ENCODE measurements at regions of chr21 and their contacts with region 1.

Region 1: GRCh38 chr21:14737922-14738321 is 191.8 kb upstream of the SAMSN1 start:
- DNase-seq: no peak
- ATAC-seq: peak; percentile 82
- H3K4me3 Mint-ChIP-seq: no peak overlapping the region
- H3K27ac Mint-ChIP-seq: no peak overlapping the region
- H3K4me1 Mint-ChIP-seq: peaks cover 35% of the 10 kb centered on the region
- H3K27me3 Mint-ChIP-seq: no peaks in the 10 kb centered on the region
- CTCF ChIP-seq: no peak

Region 2: GRCh38 chr21:14403681-14404318 is 334.1 kb before region 1 on chr21:
- CTCF ChIA-PET with region 1: interaction called, 15 read pairs
- POLR2A ChIA-PET with region 1: no interaction called
- intact Hi-C with region 1: loop called (anchors 1 kb)
- DNase-seq: no peak
- ATAC-seq: peak; percentile 57
- H3K4me3 Mint-ChIP-seq: no peak overlapping the region
- H3K27ac Mint-ChIP-seq: no peak overlapping the region
- H3K4me1 Mint-ChIP-seq: no peaks in the 10 kb centered on the region
- H3K27me3 Mint-ChIP-seq: no peaks in the 10 kb centered on the region
- CTCF ChIP-seq: peak; percentile 77

Region 3: GRCh38 chr21:14533504-14534428 is 204.2 kb before region 1 on chr21:
- CTCF ChIA-PET with region 1: interaction called, 16 read pairs
- POLR2A ChIA-PET with region 1: no interaction called
- intact Hi-C with region 1: no loop called
- DNase-seq: no peak
- ATAC-seq: peak; percentile 85
- H3K4me3 Mint-ChIP-seq: peak overlapping the region; percentile 71
- H3K27ac Mint-ChIP-seq: peak overlapping the region; percentile 98
- H3K4me1 Mint-ChIP-seq: peaks cover 79% of the 10 kb centered on the region
- H3K27me3 Mint-ChIP-seq: no peaks in the 10 kb centered on the region
- CTCF ChIP-seq: no peak

Region 4: GRCh38 chr21:14686466-14687267 is 51.3 kb before region 1 on chr21:
- CTCF ChIA-PET with region 1: interaction called, 12 read pairs
- POLR2A ChIA-PET with region 1: no interaction called
- intact Hi-C with region 1: loop called (anchors 2 kb)
- DNase-seq: no peak
- ATAC-seq: peak; percentile 35
- H3K4me3 Mint-ChIP-seq: peak overlapping the region; percentile 30
- H3K27ac Mint-ChIP-seq: peak overlapping the region; percentile 82
- H3K4me1 Mint-ChIP-seq: peaks cover 73% of the 10 kb centered on the region
- H3K27me3 Mint-ChIP-seq: no peaks in the 10 kb centered on the region
- CTCF ChIP-seq: no peak

Region 5: DNA sequence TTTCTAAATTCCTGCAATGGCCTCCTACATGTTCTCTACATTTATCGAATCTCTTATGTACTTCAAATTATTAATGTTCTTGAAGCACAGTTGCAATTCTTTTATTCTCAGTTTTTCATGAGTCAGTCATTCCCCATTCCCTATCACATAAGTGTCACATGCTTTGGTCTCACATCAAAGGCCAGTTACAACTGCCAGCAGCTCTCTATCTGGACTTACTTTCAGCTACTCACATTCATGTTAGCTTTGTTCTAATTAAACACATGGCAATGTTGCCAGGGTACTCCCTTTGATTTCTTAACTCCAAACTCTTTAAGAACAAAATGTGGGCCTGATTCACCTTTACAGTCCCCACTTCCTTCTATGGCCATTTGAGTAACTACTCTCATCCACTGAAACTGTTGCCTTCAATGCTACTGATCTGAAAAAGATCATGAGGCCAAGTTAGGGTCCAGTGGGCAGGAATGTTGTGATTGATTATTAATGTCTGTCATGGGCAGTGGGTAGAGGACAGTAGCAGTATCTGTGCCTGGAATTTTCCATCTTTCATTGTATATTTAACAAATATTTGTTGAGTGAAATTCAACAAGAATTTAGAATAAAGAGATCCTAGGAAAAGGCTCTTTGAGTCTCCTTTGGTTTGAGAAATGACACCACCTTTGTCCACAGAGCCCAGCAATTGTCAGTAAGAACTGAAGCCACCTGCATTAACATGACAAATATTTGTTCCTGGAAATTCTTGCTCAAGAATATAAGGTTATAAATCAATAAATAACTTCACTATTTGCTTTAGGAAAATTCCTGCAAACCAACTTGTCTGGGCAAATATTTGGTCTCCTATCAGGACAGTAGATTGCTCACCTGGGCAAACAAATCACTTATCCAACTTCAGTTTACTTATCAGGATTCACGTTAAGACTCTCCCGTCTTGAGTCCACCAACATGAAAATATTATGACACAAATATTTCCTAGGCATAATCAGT is 38.2 kb before region 1 on chr21:
- CTCF ChIA-PET with region 1: no interaction called
- POLR2A ChIA-PET with region 1: no interaction called
- intact Hi-C with region 1: no loop called
- DNase-seq: no peak
- ATAC-seq: no peak
- H3K4me3 Mint-ChIP-seq: no peak overlapping the region
- H3K27ac Mint-ChIP-seq: no peak overlapping the region
- H3K4me1 Mint-ChIP-seq: no peaks in the 10 kb centered on the region
- H3K27me3 Mint-ChIP-seq: no peaks in the 10 kb centered on the region
- CTCF ChIP-seq: no peak

Region 6: GRCh38 chr21:15483138-15483780 is 745.3 kb after region 1 on chr21:
- CTCF ChIA-PET with region 1: interaction called, 7 read pairs
- POLR2A ChIA-PET with region 1: no interaction called
- intact Hi-C with region 1: loop called (anchors 1 kb)
- DNase-seq: peak; percentile 54
- ATAC-seq: peak; percentile 99
- H3K4me3 Mint-ChIP-seq: no peak overlapping the region
- H3K27ac Mint-ChIP-seq: no peak overlapping the region
- H3K4me1 Mint-ChIP-seq: peaks cover 7% of the 10 kb centered on the region
- H3K27me3 Mint-ChIP-seq: no peaks in the 10 kb centered on the region
- CTCF ChIP-seq: no peak

Region 7: DNA sequence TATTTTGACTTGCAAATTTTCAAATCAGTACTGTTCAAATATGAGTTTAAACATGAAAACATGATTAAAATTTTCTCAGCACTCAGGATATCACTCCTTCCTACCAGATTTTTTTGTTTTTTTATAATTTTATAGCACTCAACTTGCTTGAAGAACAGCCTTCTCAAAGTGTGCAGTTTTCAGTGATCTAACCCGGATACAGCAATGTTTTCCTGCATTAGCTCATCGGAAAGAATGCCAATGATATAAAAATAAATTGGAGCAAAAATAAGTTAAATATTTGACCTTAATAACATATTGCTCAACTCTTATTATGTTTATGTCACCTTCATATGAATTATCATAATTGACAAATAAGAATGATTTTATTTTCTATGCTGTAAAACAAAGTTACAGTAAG is 1758.7 kb after region 1 on chr21:
- CTCF ChIA-PET with region 1: no interaction called
- POLR2A ChIA-PET with region 1: no interaction called
- intact Hi-C with region 1: no loop called
- DNase-seq: no peak
- ATAC-seq: no peak
- H3K4me3 Mint-ChIP-seq: no peak overlapping the region
- H3K27ac Mint-ChIP-seq: no peak overlapping the region
- H3K4me1 Mint-ChIP-seq: no peaks in the 10 kb centered on the region
- H3K27me3 Mint-ChIP-seq: no peaks in the 10 kb centered on the region
- CTCF ChIP-seq: no peak